ENCODE measurements at regions of chr17 and their contacts with region 1.

Region 1: DNA sequence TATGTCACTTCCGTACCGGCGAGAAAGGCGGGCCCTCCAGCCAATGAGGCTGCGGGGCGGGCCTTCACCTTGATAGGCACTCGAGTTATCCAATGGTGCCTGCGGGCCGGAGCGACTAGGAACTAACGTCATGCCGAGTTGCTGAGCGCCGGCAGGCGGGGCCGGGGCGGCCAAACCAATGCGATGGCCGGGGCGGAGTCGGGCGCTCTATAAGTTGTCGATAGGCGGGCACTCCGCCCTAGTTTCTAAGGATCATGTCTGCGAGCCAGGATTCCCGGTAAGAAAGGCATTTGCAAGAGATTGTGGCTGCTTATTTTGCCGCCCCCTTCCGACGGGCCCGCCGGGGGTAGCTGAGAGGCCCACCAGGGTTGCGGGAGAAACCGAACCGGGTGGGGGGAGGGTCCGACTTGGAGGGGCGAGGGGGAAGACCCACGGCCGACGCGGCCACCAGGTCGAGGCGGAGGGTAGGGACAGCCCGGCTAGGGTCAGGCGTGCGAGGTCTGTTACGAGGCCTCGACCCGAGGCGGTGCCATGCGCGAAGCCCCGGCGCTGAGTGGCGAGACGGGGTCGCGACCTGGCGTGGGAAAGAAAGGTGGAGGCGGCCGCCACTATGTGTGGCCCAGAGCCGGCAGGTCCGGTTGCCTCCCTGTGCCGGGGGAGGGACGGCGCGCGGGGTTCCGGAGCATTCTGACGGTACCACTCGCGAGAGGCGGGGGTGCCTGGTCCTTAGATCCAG is 6.7 kb upstream of the CD68 start:
- DNase-seq: peak; percentile 99
- CTCF ChIP-seq: no peak

Region 2: DNA sequence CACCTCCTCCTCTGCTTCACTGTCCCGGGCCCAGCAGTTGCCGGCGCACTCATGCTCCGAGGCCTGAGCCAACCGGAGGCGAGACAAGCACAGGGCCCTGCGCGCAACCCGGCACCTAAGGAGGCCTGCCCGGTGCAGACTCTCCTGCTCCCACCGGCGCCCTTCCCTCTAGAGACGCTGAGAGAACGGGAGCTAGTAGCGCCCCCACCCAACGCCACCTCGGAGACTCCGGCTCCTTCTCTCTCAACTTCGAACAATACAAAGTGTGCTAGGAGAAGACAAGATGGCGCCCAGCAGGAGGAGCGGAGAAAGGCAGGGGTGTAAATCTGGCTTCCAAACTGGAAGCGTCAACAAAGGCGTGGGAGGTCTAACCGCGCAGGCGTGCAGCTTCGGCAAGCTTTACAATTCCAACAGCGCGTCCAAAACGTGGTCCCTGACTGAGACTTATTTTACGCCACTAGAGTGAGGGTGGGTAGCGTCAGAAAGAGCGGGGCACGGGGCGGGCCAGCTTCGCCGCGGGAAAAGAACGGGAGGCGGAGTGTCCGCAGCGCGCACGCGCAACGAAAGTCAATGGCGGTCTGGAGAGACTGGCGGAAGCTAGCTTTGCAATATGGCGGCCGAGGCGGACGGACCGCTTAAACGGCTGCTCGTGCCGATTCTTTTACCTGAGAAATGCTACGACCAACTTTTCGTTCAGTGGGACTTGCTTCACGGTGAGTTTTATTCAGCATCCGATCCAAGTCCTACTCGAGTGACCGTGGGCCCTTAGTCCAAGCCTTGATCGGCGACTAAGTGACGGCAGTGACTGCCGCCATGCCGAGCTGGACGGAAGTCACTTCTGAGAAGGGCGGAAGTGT is 10.7 kb after region 1 on chr17 and contains the start of gene MPDU1:
- CTCF ChIA-PET with region 1: interaction called, 17 read pairs
- POLR2A ChIA-PET with region 1: interaction called, 32 read pairs
- DNase-seq: peak; percentile 90
- CTCF ChIP-seq: no peak